ENCODE measurements at regions of chr7 and their contacts with region 1.

Region 1: DNA sequence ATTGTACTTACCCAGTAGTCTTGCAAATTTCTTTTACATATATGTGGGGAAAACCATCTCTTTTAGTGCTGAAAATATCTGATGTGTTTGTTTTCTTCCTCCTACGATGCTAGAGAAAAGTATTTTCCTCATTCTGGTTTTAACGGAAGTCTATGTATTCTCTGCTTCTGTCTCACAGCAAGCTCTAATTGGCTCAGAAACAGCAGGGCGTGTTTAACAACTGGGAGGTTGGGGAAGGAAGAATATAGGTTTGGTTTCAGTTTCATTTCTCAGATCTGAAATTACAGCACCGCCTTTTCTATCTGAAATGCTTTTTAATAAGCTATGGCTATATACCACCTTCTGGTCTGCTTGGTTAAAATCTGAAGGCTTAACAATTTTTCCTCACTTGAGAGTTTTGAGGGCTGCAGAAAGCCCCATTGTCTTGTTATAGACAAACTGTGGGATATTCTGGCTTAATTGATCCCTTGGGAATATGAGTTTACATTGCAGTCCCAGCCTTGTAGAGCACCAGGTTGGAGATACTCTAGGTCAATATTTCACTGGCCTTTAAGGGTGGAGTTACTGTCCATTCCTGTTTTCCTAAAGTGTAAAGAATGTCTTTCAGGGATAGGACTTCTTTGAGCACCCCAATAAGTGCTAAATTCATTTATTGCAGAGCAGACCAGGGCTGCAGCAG is at the start of gene SAMD9:
- DNase-seq: peak in 1 of 2 donors; percentile 73
- ATAC-seq: peak in 7 of 8 donors; percentile 87 to 97 (median 95)
- H3K4me3 ChIP-seq: peak within 1 kb of the TSS; percentile 23 to 62 (median 48)
- H3K27ac ChIP-seq: peak within 1 kb of the TSS in 9 of 10 donors; percentile 54 to 90 (median 72)
- H3K4me1 ChIP-seq: peaks cover 3 to 34% (median 14%) of the 10 kb centered on the region in 9 donors
- H3K27me3 ChIP-seq: no peaks in the 10 kb centered on the region
- CTCF ChIP-seq: no peak
- total RNA-seq, gene SAMD9: 1.7 to 6.2 (median 3.4) TPM

Region 2: DNA sequence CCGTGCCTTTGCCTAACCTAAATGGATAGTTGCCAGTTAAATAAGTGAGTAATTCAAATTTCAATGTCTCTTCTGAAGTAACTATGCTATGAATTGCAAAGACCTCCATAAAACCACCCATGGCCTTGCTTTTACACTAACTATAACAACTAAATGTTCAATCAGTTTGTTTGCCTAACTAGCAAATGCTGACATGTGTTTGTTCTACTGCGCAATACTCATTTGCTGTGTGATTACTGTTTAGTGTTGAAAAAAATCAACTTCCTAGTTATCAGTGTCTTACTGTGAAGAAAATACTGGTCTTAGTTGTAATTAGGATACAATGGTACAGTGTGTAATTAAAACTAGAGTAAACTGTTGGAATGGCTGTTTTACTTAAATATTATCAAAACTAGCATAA is 718.0 kb before region 1 on chr7:
- intact Hi-C with region 1: no loop called
- DNase-seq: no peak
- ATAC-seq: no peak
- H3K4me3 ChIP-seq: no peak overlapping the region
- H3K27ac ChIP-seq: no peak overlapping the region
- H3K4me1 ChIP-seq: no peaks in the 10 kb centered on the region
- H3K27me3 ChIP-seq: no peaks in the 10 kb centered on the region
- CTCF ChIP-seq: no peak

Region 3: GRCh38 chr7:92790992-92791391 is 327.0 kb before region 1 on chr7:
- intact Hi-C with region 1: no loop called
- DNase-seq: no peak
- ATAC-seq: peak in 2 of 8 donors; percentile 54 to 85
- H3K4me3 ChIP-seq: no peak overlapping the region
- H3K27ac ChIP-seq: no peak overlapping the region
- H3K4me1 ChIP-seq: peaks cover 0 to 52% (median 40%) of the 10 kb centered on the region in 9 donors
- H3K27me3 ChIP-seq: no peaks in the 10 kb centered on the region
- CTCF ChIP-seq: no peak

Region 4: DNA sequence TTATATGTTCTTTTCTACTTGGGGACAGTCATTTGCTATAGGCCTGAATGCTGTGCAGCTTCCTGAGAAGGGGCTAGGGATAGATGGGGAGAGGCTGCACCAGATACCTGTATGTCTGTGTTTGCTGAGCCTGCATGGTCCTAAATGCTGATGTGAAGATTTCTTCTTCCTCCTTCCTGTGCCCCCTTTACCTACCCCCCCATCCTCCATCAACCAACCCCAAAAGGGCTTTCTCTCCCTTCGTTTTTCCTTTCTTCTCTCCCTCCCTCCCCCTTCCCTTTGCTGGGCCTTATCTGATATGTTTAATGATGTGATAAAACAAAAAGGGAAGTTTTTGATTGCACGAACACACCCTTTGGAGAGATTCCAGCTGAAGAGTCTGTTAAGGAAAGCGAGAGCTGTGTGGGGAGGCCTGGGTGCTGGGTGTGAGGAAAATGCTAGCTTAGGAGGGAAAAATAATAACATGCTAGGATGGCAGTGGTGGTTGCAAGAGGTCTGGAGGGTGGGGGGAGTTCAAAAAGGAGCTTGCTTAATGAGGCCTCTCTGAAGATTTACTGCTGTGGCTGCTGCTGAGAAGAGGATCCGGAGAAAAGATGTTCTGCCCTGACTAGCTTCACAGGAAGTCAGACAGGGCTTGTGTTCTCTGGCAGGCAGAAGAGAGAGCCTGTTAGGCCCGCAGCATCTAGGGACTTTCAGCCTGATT is 102.1 kb before region 1 on chr7:
- intact Hi-C with region 1: loop called in 1 of 10 experiments (anchors 5 kb)
- DNase-seq: no peak
- ATAC-seq: peak in 6 of 8 donors; percentile 22 to 83 (median 64)
- H3K4me3 ChIP-seq: no peak overlapping the region
- H3K27ac ChIP-seq: peak overlapping the region in 8 of 10 donors; percentile 10 to 70 (median 44)
- H3K4me1 ChIP-seq: peaks cover 0 to 34% (median 22%) of the 10 kb centered on the region in 9 donors
- H3K27me3 ChIP-seq: no peaks in the 10 kb centered on the region
- CTCF ChIP-seq: no peak

Region 5: GRCh38 chr7:93231799-93232672 is 114.0 kb after region 1 on chr7 and contains the start of gene VPS50:
- intact Hi-C with region 1: loop called in 1 of 10 experiments (anchors 10 kb)
- DNase-seq: peak; percentile 87 to 97
- ATAC-seq: peak; percentile 100
- H3K4me3 ChIP-seq: peak within 1 kb of the TSS; percentile 64 to 97 (median 78)
- H3K27ac ChIP-seq: peak within 1 kb of the TSS in 9 of 10 donors; percentile 14 to 81 (median 58)
- H3K4me1 ChIP-seq: peaks cover 0 to 24% (median 17%) of the 10 kb centered on the region in 9 donors
- H3K27me3 ChIP-seq: no peaks in the 10 kb centered on the region
- CTCF ChIP-seq: peak in 1 of 9 donors; percentile 9
- total RNA-seq, gene VPS50: 16.0 to 25.6 (median 18.9) TPM